ENCODE measurements at regions of chr10 and their contacts with region 1.

Region 1: DNA sequence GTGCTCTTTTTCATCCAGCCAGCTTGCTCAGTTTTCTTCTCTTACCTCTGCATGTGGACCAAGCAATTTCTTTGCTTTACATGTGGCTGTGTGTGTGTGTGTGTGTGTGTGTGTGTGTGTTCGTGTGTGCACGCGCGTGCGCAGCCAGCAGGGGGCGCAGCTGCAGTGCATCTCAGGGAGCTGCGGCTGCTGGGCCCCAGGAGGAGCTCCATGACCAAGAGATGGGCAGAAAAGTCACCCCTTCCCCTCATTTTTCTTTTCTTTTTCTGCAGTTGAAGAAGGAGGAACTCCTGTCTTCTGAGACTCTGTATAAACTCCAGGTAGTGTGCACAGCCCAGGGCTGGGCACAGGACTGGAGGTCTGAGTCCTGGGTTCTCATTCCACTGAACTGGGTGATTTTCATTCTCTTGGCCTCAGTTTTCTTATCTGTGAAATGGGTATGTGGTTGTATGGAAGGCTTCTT is 41.8 kb downstream of the BLNK start:
- DNase-seq: peak; percentile 70 to 93 (median 84)
- ATAC-seq: peak; percentile 99
- H3K4me3 ChIP-seq: no peak overlapping the region
- H3K27ac ChIP-seq: no peak overlapping the region
- H3K4me1 ChIP-seq: no peaks in the 10 kb centered on the region
- H3K27me3 ChIP-seq: no peaks in the 10 kb centered on the region
- CTCF ChIP-seq: peak; percentile 47 to 64

Region 2: GRCh38 chr10:96107623-96108038 is 122.0 kb before region 1 on chr10:
- intact Hi-C with region 1: no loop called
- DNase-seq: no peak
- ATAC-seq: no peak
- H3K4me3 ChIP-seq: no peak overlapping the region
- H3K27ac ChIP-seq: no peak overlapping the region
- H3K4me1 ChIP-seq: no peaks in the 10 kb centered on the region
- H3K27me3 ChIP-seq: peaks cover 50 to 87% of the 10 kb centered on the region in 2 donors
- CTCF ChIP-seq: no peak

Region 3: GRCh38 chr10:96292971-96293920 is 63.6 kb after region 1 on chr10:
- intact Hi-C with region 1: loop called in 1 of 2 experiments (anchors 5 kb)
- DNase-seq: peak in 1 of 4 donors; percentile 61
- ATAC-seq: peak; percentile 97
- H3K4me3 ChIP-seq: no peak overlapping the region
- H3K27ac ChIP-seq: no peak overlapping the region
- H3K4me1 ChIP-seq: peaks cover under 1 to 2% of the 10 kb centered on the region in 2 donors
- H3K27me3 ChIP-seq: no peaks in the 10 kb centered on the region
- CTCF ChIP-seq: peak; percentile 45 to 60